Psoas muscle (tissue), 8 donors: ENCODE measurements at regions of chr6 and their contacts with region 1.

Region 1: DNA sequence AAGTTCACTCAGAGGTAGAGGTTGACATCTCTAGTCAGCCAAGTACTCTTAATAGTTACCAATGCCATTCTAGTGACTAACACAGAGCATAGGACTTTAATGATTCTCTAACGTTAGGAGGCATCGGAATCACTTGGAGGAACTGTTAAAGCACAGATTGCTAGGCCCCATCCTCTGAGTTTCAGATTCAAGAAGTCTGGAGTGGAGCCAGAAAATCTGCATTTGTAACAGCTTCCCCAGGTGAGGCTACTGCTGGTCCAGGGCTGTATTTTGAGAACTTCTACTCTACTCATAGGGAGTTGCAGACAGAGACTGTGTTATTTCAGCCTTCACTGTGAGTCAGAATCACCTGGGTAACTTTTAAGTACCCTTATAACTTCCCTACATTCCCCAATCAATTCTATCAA is 5.7 kb downstream of the LMBRD1 start:
- DNase-seq: no peak
- ATAC-seq: peak; percentile 60 to 85 (median 71)
- H3K4me3 ChIP-seq: no peak overlapping the region
- H3K27ac ChIP-seq: peak overlapping the region; percentile 66
- H3K4me1 ChIP-seq: peaks cover 45% of the 10 kb centered on the region
- H3K27me3 ChIP-seq: no peaks in the 10 kb centered on the region
- CTCF ChIP-seq: no peak

Region 2: DNA sequence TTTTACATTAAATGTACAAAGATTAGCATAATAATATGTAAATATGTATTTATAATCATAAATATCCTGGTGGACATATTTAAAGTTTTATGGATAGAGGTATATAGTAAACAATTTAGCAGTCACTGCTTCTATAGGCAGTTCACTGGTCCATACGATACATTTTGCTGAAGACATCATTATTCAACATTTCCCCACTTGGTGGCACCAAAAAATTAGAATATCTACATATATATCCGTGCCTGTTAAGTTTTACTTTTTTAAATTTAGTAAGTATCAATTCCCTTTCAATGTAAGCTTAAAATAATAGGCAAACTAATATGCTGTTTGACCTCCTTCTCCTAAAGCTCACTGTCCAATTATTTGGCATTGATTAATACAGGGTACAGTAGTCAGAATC is 58.4 kb before region 1 on chr6:
- intact Hi-C with region 1: loop called in 1 of 2 experiments (anchors 5 kb)
- DNase-seq: no peak
- ATAC-seq: no peak
- H3K4me3 ChIP-seq: no peak overlapping the region
- H3K27ac ChIP-seq: no peak overlapping the region
- H3K4me1 ChIP-seq: peaks cover 4% of the 10 kb centered on the region
- H3K27me3 ChIP-seq: no peaks in the 10 kb centered on the region
- CTCF ChIP-seq: peak; percentile 9